H1 (cell line): ENCODE measurements at regions of chr9 and their contacts with region 1.

Region 1: GRCh38 chr9:35829084-35829763 is at the start of gene TMEM8B:
- DNase-seq: peak in 1 of 2 experiments; percentile 96
- H3K4me3 ChIP-seq: peak within 1 kb of the TSS; percentile 51 to 83 (median 68)
- H3K27ac ChIP-seq: no peak within 1 kb of the TSS; the same call in 1 of the 2 replicates
- H3K4me1 ChIP-seq: peaks cover 1 to 13% (median 6%) of the 10 kb centered on the region in 4 experiments
- H3K27me3 ChIP-seq: no peaks in the 10 kb centered on the region
- CTCF ChIP-seq: no peak
- EP300 ChIP-seq: no peak
- POLR2A ChIP-seq: no peak
- RAD21 ChIP-seq: no peak
- total RNA-seq, gene TMEM8B: 5.7 and 7.5 TPM in 2 replicates

Region 2: DNA sequence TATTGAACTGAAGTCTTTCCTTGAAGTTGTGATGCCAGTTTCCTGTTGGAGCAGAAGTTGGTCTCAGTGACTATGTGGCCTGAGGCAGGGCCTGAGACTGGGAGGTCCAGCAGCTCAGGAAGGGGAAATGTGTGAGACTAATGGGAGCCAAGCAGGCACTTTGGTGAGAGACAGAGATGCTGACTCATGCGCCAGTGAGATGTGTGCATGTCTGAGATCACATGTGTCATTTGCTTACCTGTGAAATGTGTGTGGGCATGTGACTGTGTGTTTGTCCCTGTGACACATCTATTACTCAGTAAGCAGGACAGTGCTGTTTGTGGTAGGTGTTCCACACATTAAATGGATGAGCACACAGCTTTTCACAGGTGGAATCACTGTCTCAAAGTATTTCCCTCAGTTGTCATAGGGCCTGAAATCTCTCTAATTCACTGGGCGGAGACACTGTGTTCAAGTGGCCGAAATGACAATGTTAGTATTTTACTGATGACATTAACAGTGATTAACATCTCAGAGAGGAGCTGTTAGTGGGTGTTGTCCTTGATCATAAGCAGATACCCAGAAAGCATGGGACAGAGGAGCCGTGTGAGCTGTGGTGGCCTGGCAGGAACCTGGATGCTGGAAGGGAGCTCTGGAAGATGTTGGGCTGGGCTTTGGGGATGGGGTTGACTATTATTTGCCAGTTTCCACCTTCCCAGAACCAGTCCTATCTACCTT is 30.4 kb before region 1 on chr9:
- CTCF ChIA-PET with region 1: interaction called, 12 read pairs
- POLR2A ChIA-PET with region 1: no interaction called
- DNase-seq: no peak
- H3K4me3 ChIP-seq: no peak overlapping the region
- H3K27ac ChIP-seq: no peak overlapping the region
- H3K4me1 ChIP-seq: no peaks in the 10 kb centered on the region
- H3K27me3 ChIP-seq: no peaks in the 10 kb centered on the region
- CTCF ChIP-seq: no peak
- EP300 ChIP-seq: no peak
- POLR2A ChIP-seq: no peak
- RAD21 ChIP-seq: no peak

Region 3: GRCh38 chr9:35814841-35815543 is 14.2 kb before region 1 on chr9 and contains the start of gene HINT2:
- CTCF ChIA-PET with region 1: interaction called, 172 read pairs
- POLR2A ChIA-PET with region 1: interaction called, 13 read pairs
- DNase-seq: peak; percentile 93 to 96
- H3K4me3 ChIP-seq: peak within 1 kb of the TSS; percentile 72 to 98 (median 80)
- H3K27ac ChIP-seq: peak within 1 kb of the TSS; percentile 85
- H3K4me1 ChIP-seq: peaks cover 0 to 7% (median 4%) of the 10 kb centered on the region in 4 experiments; a peak in 6 of 7 replicates
- H3K27me3 ChIP-seq: peaks cover 0 to 3% (median 2%) of the 10 kb centered on the region in 4 experiments; a peak in 1 of 7 replicates
- CTCF ChIP-seq: no peak
- EP300 ChIP-seq: no peak
- POLR2A ChIP-seq: peak; percentile 7 to 79; a peak in 2 of 3 replicates
- RAD21 ChIP-seq: no peak
- total RNA-seq, gene HINT2: 32.1 and 34.8 TPM in 2 replicates

Region 4: GRCh38 chr9:35859310-35859989 is 30.2 kb after region 1 on chr9:
- CTCF ChIA-PET with region 1: interaction called, 16 read pairs
- POLR2A ChIA-PET with region 1: interaction called, 3 read pairs
- DNase-seq: peak in 1 of 2 experiments; percentile 43
- H3K4me3 ChIP-seq: no peak overlapping the region
- H3K27ac ChIP-seq: no peak overlapping the region
- H3K4me1 ChIP-seq: no peaks in the 10 kb centered on the region
- H3K27me3 ChIP-seq: no peaks in the 10 kb centered on the region; a peak in 1 of 7 replicates
- CTCF ChIP-seq: peak in 2 of 3 experiments; percentile 4; a peak in 2 of 4 replicates
- EP300 ChIP-seq: no peak
- POLR2A ChIP-seq: no peak
- RAD21 ChIP-seq: peak; percentile 7 to 13; a peak in 1 of 4 replicates

Region 5: GRCh38 chr9:35910613-35911359 is 81.6 kb after region 1 on chr9:
- CTCF ChIA-PET with region 1: interaction called, 26 read pairs
- POLR2A ChIA-PET with region 1: no interaction called
- DNase-seq: peak in 1 of 2 experiments; percentile 55
- H3K4me3 ChIP-seq: no peak overlapping the region
- H3K27ac ChIP-seq: no peak overlapping the region
- H3K4me1 ChIP-seq: peaks cover 9 to 33% (median 21%) of the 10 kb centered on the region in 4 experiments
- H3K27me3 ChIP-seq: no peaks in the 10 kb centered on the region; a peak in 2 of 7 replicates
- CTCF ChIP-seq: peak; percentile 47 to 64 (median 56)
- EP300 ChIP-seq: no peak
- POLR2A ChIP-seq: no peak
- RAD21 ChIP-seq: peak; percentile 73 to 74